ENCODE measurements at regions of chr14 and their contacts with region 1.

Region 1: DNA sequence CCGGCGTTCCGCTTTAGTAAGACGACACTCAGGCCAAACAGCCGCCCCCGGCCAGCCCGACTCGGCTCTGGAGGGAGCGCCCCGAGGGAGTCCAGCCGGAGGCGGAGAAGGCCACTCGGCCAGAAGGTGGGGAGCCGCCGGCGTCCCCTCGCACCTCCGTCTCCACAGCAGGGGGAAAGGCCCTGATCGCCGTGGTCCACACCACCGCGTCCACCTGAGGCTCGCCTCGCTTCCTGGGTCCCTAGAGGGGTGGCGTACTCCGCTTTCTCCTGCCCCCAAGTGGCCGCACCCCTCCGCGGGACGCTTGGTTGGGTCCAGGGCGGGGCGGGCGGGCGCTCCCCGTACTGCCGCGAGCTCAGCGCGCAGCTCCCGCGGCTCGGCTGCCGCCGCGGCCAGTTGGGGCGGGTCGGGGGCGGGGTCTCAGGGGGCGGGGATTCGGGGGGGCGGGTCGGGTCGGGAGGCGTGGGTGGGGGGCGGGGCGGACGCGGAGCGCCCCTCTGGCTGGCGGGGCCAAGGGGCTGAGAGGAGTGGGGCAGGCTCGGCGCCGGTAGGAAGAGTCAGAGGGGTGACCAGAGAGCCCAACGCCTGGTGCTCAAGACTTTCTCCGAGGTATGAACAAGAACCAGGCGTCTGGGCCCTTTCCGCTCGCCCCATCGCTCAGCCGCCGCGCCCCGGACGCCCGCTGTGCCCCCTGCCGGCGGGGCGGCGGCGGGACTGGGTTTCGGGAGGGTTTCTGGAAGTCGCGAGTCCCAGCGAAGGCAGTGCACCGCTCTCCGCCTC is at the start of gene FRMD6:
- DNase-seq: peak; percentile 75 to 90 (median 83)
- ATAC-seq: peak; percentile 90
- H3K4me3 ChIP-seq: peak within 1 kb of the TSS; percentile 76
- H3K4me3 Mint-ChIP-seq: peak within 1 kb of the TSS; percentile 77 to 89 (median 84)
- H3K27ac ChIP-seq: peak within 1 kb of the TSS; percentile 78
- H3K27ac Mint-ChIP-seq: peak within 1 kb of the TSS in 8 of 9 donors; percentile 20 to 83 (median 73)
- H3K4me1 ChIP-seq: peaks cover 6 to 18% of the 10 kb centered on the region in 2 donors
- H3K4me1 Mint-ChIP-seq: peaks cover 12 to 29% (median 18%) of the 10 kb centered on the region in 7 donors
- H3K27me3 ChIP-seq: peaks cover 0 to 12% of the 10 kb centered on the region in 2 donors
- H3K27me3 Mint-ChIP-seq: peaks cover 9 to 31% (median 19%) of the 10 kb centered on the region in 5 donors
- total RNA-seq, gene FRMD6: 0.93 to 4.8 (median 3.9) TPM

Region 2: DNA sequence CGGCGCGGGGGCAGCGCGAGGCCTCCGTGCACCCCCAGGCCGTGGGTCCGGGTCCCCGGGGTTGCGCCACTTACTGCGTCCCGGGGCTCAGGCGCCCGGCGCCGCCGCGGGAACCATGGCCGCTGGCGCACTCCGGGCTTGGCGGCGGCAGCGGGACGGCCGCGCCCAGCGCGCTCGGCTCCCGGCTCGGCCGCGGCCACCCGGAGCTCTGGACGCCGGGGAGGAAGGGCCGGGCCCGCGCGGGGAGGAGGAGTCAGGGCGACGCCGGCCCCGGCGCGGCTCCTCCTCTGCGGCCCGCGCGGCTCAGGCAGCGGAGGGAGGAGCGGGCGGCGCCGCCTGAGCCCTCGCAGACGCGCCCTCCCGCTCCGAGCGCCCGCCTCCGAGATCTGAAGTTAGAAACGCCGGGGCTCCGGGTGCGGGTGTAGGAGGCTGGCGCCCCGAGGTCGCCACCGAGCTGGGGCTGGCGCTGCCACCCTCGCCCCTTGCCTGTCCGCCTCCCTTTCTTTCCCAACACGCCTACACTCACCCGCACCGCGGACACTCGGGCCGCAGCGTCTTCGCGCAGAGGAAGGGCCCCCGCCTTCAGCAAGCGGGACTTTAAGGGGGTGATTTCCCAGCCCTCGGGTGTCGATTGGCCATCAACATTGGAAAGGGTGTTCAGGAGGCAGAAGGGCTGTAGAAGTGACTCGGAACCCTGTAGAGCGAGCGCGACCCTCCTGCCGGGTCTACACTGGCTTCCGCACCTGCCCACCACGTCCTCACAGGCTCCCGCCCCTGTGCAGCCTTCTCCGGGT is 820.4 kb before region 1 on chr14 and contains the start of gene NIN:
- CTCF ChIA-PET with region 1: no interaction called
- POLR2A ChIA-PET with region 1: no interaction called
- intact Hi-C with region 1: loop called in 1 of 2 experiments (anchors 10 kb)
- DNase-seq: peak; percentile 58 to 80 (median 74)
- ATAC-seq: peak; percentile 91
- H3K4me3 ChIP-seq: peak within 1 kb of the TSS; percentile 80
- H3K4me3 Mint-ChIP-seq: peak within 1 kb of the TSS; percentile 91 to 99 (median 96)
- H3K27ac ChIP-seq: peak within 1 kb of the TSS; percentile 84
- H3K27ac Mint-ChIP-seq: peak within 1 kb of the TSS; percentile 85 to 99 (median 95)
- H3K4me1 ChIP-seq: peaks cover 40 to 42% of the 10 kb centered on the region in 2 donors
- H3K4me1 Mint-ChIP-seq: peaks cover 46 to 84% (median 74%) of the 10 kb centered on the region in 7 donors
- H3K27me3 ChIP-seq: no peaks in the 10 kb centered on the region
- H3K27me3 Mint-ChIP-seq: peaks cover 0 to 13% (median 0%) of the 10 kb centered on the region in 5 donors
- total RNA-seq, gene NIN: 84.5 to 149 (median 128) TPM

Region 3: GRCh38 chr14:51283402-51284085 is 368.0 kb before region 1 on chr14:
- CTCF ChIA-PET with region 1: interaction called, 4 read pairs
- POLR2A ChIA-PET with region 1: no interaction called
- intact Hi-C with region 1: loop called (anchors 1 kb)
- DNase-seq: peak in 5 of 9 donors; percentile 25 to 47 (median 32)
- ATAC-seq: peak; percentile 73
- H3K4me3 ChIP-seq: no peak overlapping the region
- H3K4me3 Mint-ChIP-seq: no peak overlapping the region
- H3K27ac ChIP-seq: no peak overlapping the region
- H3K27ac Mint-ChIP-seq: no peak overlapping the region
- H3K4me1 ChIP-seq: no peaks in the 10 kb centered on the region
- H3K4me1 Mint-ChIP-seq: peaks cover 0 to 2% (median 0%) of the 10 kb centered on the region in 7 donors
- H3K27me3 ChIP-seq: no peaks in the 10 kb centered on the region
- H3K27me3 Mint-ChIP-seq: no peaks in the 10 kb centered on the region

Region 4: DNA sequence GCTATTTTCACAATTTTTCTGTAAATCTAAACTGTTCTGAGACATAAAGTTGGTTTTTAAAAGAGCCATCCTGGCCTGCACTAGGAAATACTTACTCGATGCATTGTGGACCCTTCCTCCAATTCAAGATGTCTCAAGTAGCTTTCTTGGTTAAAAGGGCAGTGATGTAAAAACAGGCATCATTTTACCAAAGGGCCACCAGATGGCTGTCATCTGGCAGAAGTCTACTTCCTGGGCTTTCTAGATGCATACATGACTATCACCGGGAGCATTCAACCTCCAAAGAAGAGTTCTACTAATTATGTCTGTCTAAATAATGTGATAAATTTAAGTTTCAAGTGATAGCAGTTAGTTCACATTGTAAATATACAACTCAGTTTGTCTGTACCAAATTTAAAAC is 96.6 kb before region 1 on chr14:
- CTCF ChIA-PET with region 1: interaction called, 6 read pairs
- POLR2A ChIA-PET with region 1: no interaction called
- intact Hi-C with region 1: loop called in 1 of 2 experiments (anchors 1 kb)
- DNase-seq: no peak
- ATAC-seq: no peak
- H3K4me3 ChIP-seq: no peak overlapping the region
- H3K4me3 Mint-ChIP-seq: no peak overlapping the region
- H3K27ac ChIP-seq: no peak overlapping the region
- H3K27ac Mint-ChIP-seq: no peak overlapping the region
- H3K4me1 ChIP-seq: no peaks in the 10 kb centered on the region
- H3K4me1 Mint-ChIP-seq: no peaks in the 10 kb centered on the region
- H3K27me3 ChIP-seq: no peaks in the 10 kb centered on the region
- H3K27me3 Mint-ChIP-seq: peaks cover 11 to 24% (median 12%) of the 10 kb centered on the region in 5 donors

Region 5: GRCh38 chr14:51576117-51576430 is 75.5 kb before region 1 on chr14:
- CTCF ChIA-PET with region 1: no interaction called
- POLR2A ChIA-PET with region 1: no interaction called
- intact Hi-C with region 1: no loop called
- DNase-seq: no peak
- ATAC-seq: no peak
- H3K4me3 ChIP-seq: no peak overlapping the region
- H3K4me3 Mint-ChIP-seq: no peak overlapping the region
- H3K27ac ChIP-seq: no peak overlapping the region
- H3K27ac Mint-ChIP-seq: no peak overlapping the region
- H3K4me1 ChIP-seq: no peaks in the 10 kb centered on the region
- H3K4me1 Mint-ChIP-seq: no peaks in the 10 kb centered on the region
- H3K27me3 ChIP-seq: peaks cover 0 to 13% of the 10 kb centered on the region in 2 donors
- H3K27me3 Mint-ChIP-seq: peaks cover 43 to 72% (median 55%) of the 10 kb centered on the region in 5 donors

Region 6: DNA sequence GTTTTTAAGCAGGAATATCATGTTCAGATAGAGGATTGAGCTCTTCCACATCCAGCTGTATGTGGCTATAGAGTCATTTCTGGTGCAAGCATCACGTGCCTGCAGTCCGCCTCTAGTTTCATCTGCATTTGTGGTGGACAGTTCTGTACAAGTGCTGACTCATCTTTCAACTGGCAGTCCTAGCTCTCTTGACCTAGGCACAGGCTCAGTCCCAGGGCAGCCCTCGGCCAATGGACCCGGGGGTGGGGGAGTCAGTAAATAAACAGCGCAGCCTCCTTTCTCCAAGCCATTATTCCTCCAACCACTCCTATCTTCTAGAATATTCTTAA is 41.7 kb before region 1 on chr14:
- CTCF ChIA-PET with region 1: no interaction called
- POLR2A ChIA-PET with region 1: no interaction called
- intact Hi-C with region 1: no loop called
- DNase-seq: no peak
- ATAC-seq: no peak
- H3K4me3 ChIP-seq: no peak overlapping the region
- H3K4me3 Mint-ChIP-seq: no peak overlapping the region
- H3K27ac ChIP-seq: no peak overlapping the region
- H3K27ac Mint-ChIP-seq: no peak overlapping the region
- H3K4me1 ChIP-seq: no peaks in the 10 kb centered on the region
- H3K4me1 Mint-ChIP-seq: no peaks in the 10 kb centered on the region
- H3K27me3 ChIP-seq: no peaks in the 10 kb centered on the region
- H3K27me3 Mint-ChIP-seq: peaks cover 3 to 27% (median 12%) of the 10 kb centered on the region in 5 donors

Region 7: GRCh38 chr14:51846631-51847488 is 195.3 kb after region 1 on chr14:
- CTCF ChIA-PET with region 1: no interaction called
- POLR2A ChIA-PET with region 1: no interaction called
- intact Hi-C with region 1: loop called (anchors 1 kb)
- DNase-seq: peak; percentile 69 to 98 (median 94)
- ATAC-seq: peak; percentile 87
- H3K4me3 ChIP-seq: peak overlapping the region; percentile 63
- H3K4me3 Mint-ChIP-seq: peak overlapping the region; percentile 55 to 96 (median 88)
- H3K27ac ChIP-seq: peak overlapping the region; percentile 96
- H3K27ac Mint-ChIP-seq: peak overlapping the region; percentile 97 to 100 (median 99)
- H3K4me1 ChIP-seq: peaks cover 23 to 43% of the 10 kb centered on the region in 2 donors
- H3K4me1 Mint-ChIP-seq: peaks cover 29 to 83% (median 74%) of the 10 kb centered on the region in 7 donors
- H3K27me3 ChIP-seq: no peaks in the 10 kb centered on the region
- H3K27me3 Mint-ChIP-seq: peaks cover 0 to 2% (median 0%) of the 10 kb centered on the region in 5 donors

Region 8: GRCh38 chr14:52313903-52314594 is 662.5 kb after region 1 on chr14 and contains the start of gene PTGER2:
- CTCF ChIA-PET with region 1: no interaction called
- POLR2A ChIA-PET with region 1: no interaction called
- intact Hi-C with region 1: loop called in 1 of 2 experiments (anchors 5 kb)
- DNase-seq: peak; percentile 12 to 91 (median 34)
- ATAC-seq: peak; percentile 79
- H3K4me3 ChIP-seq: peak within 1 kb of the TSS; percentile 80
- H3K4me3 Mint-ChIP-seq: peak within 1 kb of the TSS; percentile 88 to 100 (median 98)
- H3K27ac ChIP-seq: peak within 1 kb of the TSS; percentile 62
- H3K27ac Mint-ChIP-seq: peak within 1 kb of the TSS; percentile 51 to 98 (median 92)
- H3K4me1 ChIP-seq: peaks cover 14 to 26% of the 10 kb centered on the region in 2 donors
- H3K4me1 Mint-ChIP-seq: peaks cover 48 to 81% (median 57%) of the 10 kb centered on the region in 7 donors
- H3K27me3 ChIP-seq: no peaks in the 10 kb centered on the region
- H3K27me3 Mint-ChIP-seq: peaks cover 0 to 5% (median 0%) of the 10 kb centered on the region in 5 donors
- total RNA-seq, gene PTGER2: 1.7 to 162 (median 15.2) TPM